ENCODE measurements at regions of chr2 and their contacts with region 1.

Region 1: DNA sequence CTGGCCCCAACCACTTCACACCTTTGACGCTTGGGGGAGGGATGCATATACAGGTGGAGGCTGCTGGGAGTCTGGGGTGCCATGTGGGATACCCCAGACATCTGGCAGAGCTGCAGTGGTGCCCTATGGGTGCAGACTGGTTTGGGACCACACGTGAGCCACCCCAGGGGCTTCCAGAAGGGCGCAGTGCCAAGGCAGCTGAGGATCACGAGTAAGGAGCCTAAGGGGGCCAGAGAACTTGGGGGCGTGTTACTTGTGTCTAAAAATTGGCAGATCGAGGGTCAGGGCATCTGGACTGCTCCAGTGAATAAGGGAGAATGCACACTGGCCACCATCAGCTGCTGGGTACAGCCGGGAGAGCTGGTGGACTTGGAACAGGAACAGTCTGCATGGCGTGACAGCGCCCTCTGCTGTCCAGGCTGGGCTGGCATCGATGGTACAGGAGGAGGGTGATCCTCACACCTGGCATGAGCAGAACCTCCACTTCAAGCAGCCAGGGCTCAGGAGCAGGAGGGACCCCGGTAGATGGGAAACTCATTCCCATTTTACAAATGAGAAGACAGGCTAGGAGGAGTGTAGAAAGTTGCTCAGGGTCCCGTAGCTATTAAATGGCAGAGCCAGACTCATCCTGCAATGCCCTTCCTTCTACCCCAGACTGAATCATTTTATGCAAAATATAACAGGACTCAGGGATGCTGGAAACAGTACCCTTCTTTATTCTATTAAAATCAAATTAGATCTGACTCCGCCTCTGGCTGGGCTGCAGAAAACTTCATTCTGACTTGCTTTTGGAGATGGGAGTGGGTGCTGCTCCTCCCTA is 60.4 kb downstream of the ATOH8 start:
- DNase-seq: peak; percentile 68 to 95
- H3K4me3 ChIP-seq: no peak overlapping the region
- H3K27ac ChIP-seq: peak overlapping the region in 1 of 2 donors; percentile 90
- H3K4me1 ChIP-seq: peaks cover 8 to 41% of the 10 kb centered on the region in 2 donors
- H3K27me3 ChIP-seq: no peaks in the 10 kb centered on the region
- CTCF ChIP-seq: peak; percentile 94 to 97 (median 94)

Region 2: DNA sequence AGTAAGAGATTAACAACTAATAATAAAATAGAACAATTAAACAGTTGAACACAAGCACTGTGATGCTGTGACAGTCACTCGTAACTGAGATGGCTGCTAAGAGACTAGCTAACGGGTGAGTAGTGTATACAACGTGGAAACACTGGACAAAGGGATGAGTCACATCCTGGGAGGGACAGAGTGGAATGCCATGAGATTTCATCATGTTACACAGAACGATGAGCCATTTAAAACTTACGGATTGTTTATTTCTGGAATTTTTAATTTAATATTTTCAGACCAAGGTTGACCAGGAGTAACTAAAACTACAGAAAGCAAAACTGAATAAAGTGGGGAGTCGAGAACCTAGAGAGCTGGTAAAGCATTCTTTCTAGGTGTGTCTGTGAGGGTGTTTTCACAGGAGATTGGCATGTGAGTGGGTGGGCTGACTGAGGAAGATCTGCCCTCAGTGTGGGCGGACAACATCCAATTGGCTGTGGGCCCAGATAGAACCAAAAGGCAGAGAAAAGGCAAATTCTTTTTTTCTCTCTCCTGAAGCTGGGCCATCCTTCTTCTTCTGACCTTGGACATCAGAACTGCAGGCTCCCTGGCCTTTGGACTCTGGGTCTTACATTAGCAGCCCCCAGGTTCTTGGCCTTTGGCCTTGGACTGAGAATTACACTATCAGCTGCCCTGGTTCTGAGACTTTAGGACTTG is 894.2 kb before region 1 on chr2:
- intact Hi-C with region 1: no loop called
- DNase-seq: peak in 1 of 2 donors; percentile 73
- H3K4me3 ChIP-seq: no peak overlapping the region
- H3K27ac ChIP-seq: peak overlapping the region; percentile 68 to 79
- H3K4me1 ChIP-seq: peaks cover 0 to 6% of the 10 kb centered on the region in 2 donors
- H3K27me3 ChIP-seq: no peaks in the 10 kb centered on the region
- CTCF ChIP-seq: no peak

Region 3: GRCh38 chr2:85635636-85636035 is 178.6 kb before region 1 on chr2:
- intact Hi-C with region 1: loop called (anchors 5 kb)
- DNase-seq: no peak
- H3K4me3 ChIP-seq: no peak overlapping the region
- H3K27ac ChIP-seq: no peak overlapping the region
- H3K4me1 ChIP-seq: no peaks in the 10 kb centered on the region
- H3K27me3 ChIP-seq: no peaks in the 10 kb centered on the region
- CTCF ChIP-seq: no peak

Region 4: GRCh38 chr2:85707304-85707703 is 106.9 kb before region 1 on chr2:
- intact Hi-C with region 1: no loop called
- DNase-seq: peak in 1 of 2 donors; percentile 84
- H3K4me3 ChIP-seq: no peak overlapping the region
- H3K27ac ChIP-seq: peak overlapping the region; percentile 46 to 52
- H3K4me1 ChIP-seq: peaks cover 0 to 15% of the 10 kb centered on the region in 2 donors
- H3K27me3 ChIP-seq: no peaks in the 10 kb centered on the region
- CTCF ChIP-seq: peak; percentile 79 to 85 (median 82)

Region 5: DNA sequence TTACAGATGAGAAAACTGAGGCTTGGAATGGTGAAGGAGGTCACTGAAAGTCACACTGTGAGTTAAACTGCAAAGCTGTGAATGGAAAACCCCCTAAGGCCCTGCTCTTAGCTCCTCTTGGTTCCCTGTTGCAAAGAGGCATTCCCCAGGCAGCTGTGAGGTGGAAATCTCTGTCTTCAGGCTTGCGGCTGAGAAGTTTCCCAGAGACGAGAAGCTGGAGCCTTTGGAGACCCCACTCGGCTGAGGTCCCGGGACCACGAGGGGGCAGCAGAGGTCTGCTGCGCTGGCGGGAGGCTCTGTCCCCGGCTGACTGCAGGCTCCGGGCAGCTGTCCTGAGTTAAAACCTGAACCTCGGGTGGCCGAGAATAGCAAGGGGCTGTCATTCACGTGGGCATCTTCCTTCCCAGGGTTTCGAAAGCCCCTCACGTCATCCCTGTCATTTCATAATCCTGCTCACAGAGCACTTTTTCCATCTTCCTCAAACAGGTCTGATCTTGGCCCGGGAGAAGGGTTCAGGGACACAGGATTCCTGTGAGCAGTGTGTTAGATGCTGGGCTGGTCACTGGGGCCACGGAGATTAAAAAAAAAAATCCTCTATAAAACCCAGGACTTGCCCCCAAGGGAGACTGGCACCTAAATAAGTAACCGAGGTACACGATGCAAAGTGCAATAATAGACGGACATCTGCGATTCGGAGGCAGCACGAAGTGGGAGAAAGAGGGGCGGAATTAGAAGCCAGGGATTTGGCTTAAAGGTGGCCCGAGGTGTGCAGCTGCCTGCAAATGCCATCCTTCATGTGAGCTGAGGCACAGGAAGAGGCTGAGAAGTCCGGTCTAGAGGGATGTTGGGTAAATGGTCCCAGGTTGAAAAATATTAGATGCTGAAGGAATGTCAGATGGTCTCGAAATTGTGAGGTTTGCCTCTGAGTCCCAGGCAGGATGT is 85.0 kb before region 1 on chr2:
- intact Hi-C with region 1: loop called (anchors 1 kb)
- DNase-seq: peak in 1 of 2 donors; percentile 95
- H3K4me3 ChIP-seq: no peak overlapping the region
- H3K27ac ChIP-seq: peak overlapping the region in 1 of 2 donors; percentile 37
- H3K4me1 ChIP-seq: peaks cover 0 to 11% of the 10 kb centered on the region in 2 donors
- H3K27me3 ChIP-seq: no peaks in the 10 kb centered on the region
- CTCF ChIP-seq: peak; percentile 95 to 99 (median 97)

Region 6: DNA sequence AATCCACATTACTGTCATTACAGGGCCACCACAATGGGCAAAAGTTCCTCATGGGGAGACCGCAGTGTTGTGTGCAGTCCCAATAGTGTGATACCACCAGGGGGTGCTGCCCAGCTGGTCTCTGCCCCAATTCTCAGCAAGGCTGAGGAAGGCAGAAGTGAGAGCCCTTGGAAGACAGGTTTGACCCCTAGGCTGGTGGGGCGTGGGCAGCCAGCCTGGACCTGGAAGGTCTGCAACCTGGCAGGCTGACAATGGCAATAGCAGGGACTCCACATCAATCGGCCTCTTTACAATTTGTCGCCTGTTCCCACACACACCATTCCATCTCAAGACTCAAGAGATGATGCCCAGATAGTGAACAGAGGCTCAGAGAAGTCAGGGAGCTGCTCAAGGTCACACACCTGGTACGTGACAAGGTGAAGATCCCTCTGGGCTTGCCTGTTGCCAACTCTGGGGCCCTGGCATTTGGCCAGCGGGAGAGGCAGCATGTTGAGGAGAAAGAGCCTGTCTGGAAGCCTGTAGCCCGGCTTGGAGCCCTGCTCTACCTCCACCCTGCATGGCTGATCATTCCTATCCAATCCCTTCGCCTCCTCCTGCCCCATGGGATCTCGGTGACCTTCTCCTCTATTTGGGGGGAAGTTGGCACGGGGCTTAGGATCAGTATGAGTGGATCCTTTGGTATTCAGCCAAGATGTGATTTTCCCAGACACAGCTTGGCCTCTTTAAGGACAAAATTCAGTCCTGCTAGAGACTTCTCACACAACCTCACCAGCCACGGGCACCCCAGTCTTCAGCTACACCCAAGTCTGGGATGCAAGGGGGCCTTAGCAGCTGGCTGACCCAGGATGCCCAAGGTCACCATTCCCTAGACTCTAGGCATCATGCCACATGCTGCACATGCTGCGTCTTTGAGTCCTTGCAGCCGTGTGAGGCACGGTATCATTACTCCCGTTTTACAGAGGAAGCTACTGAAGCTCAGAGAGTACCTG is 63.3 kb before region 1 on chr2:
- intact Hi-C with region 1: loop called (anchors 1 kb)
- DNase-seq: peak in 1 of 2 donors; percentile 89
- H3K4me3 ChIP-seq: peak overlapping the region in 1 of 2 donors; percentile 19
- H3K27ac ChIP-seq: peak overlapping the region; percentile 97 to 98
- H3K4me1 ChIP-seq: peaks cover 11 to 46% of the 10 kb centered on the region in 2 donors
- H3K27me3 ChIP-seq: no peaks in the 10 kb centered on the region
- CTCF ChIP-seq: peak; percentile 79 to 90 (median 84)

Region 7: GRCh38 chr2:85772019-85772745 is 42.0 kb before region 1 on chr2:
- intact Hi-C with region 1: loop called (anchors 2 kb)
- DNase-seq: peak; percentile 93 to 99
- H3K4me3 ChIP-seq: peak overlapping the region in 1 of 2 donors; percentile 50
- H3K27ac ChIP-seq: peak overlapping the region; percentile 85 to 93
- H3K4me1 ChIP-seq: peaks cover 64 to 93% of the 10 kb centered on the region in 2 donors
- H3K27me3 ChIP-seq: no peaks in the 10 kb centered on the region
- CTCF ChIP-seq: peak in 1 of 3 experiments; percentile 8

Region 8: DNA sequence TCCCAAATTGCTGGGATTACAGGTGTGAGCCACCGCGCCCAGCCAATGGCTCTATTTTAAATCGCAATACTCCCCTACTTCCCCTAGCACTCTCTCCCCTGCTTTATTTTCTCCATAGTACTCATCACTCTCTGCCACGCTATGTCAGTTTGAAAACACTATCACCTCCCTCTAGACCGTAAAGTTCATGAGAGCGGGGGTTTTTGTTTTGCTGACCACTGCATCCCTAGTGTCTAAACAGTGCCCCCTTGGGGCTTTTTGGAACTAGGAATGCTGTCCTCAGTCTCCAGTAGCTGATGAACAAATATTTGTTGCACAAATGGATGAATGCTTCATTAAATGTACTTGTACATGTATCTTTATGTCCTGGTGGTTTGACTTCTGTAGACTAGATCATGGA is 16.3 kb before region 1 on chr2:
- intact Hi-C with region 1: loop called (anchors 2 kb)
- DNase-seq: peak in 1 of 2 donors; percentile 49
- H3K4me3 ChIP-seq: no peak overlapping the region
- H3K27ac ChIP-seq: peak overlapping the region; percentile 87 to 91
- H3K4me1 ChIP-seq: peaks cover 31 to 49% of the 10 kb centered on the region in 2 donors
- H3K27me3 ChIP-seq: no peaks in the 10 kb centered on the region
- CTCF ChIP-seq: peak in 2 of 3 experiments; percentile 18 to 54